ENCODE measurements at regions of chr11 and their contacts with region 1.

Region 1: DNA sequence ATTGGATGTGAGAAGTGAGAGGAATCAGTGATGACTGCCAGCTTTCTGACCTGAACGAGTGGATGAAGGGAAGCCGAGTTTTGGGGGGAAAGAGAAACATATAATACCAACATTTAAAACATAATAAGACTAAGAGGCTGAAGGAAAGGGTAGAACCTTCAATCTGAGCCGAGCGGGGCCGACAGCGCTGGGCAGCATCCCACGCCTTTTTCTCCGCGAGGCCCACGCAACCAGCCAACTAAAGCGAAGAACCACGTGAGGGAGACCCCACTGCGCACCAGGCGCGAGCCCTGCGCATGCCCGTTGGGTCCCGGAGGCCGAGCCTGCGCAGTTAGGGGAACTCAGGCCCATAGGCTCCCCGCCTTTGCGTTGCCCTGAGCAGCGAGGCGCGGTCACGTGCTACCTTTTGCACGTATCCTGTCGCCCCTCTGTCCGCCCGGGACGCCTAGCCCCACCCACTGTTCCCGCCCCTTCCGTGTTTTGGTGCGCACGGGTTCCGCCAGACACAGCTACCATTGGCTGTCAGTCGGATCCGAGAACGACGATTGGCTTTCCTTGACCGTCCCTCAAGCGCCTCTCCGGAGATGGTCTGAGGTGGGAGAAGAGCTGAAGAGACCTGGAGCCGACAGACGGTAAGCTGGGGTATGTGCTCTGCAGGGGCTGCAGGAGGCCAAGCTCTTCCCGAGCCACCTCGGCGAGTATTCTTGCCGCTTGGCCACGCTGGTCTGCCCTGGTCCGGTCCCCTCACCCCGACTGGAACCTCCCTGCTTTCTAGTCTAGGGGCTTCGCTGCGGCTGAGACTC is at the start of gene HINFP:
- DNase-seq: peak; percentile 97 to 100 (median 99)
- H3K4me3 ChIP-seq: peak within 1 kb of the TSS; percentile 78 to 90
- H3K4me3 Mint-ChIP-seq: peak within 1 kb of the TSS; percentile 88 to 99 (median 95)
- H3K27ac ChIP-seq: peak within 1 kb of the TSS; percentile 85
- H3K27ac Mint-ChIP-seq: peak within 1 kb of the TSS; percentile 90 to 98 (median 94)
- H3K4me1 ChIP-seq: peaks cover 33% of the 10 kb centered on the region
- H3K4me1 Mint-ChIP-seq: peaks cover 24 to 51% (median 28%) of the 10 kb centered on the region in 4 donors
- H3K27me3 ChIP-seq: no peaks in the 10 kb centered on the region
- H3K27me3 Mint-ChIP-seq: no peaks in the 10 kb centered on the region
- total RNA-seq, gene HINFP: 70.8 to 75.3 TPM

Region 2: GRCh38 chr11:119018074-119018938 is 102.9 kb before region 1 on chr11 and contains the starts of genes RPS25 and TRAPPC4:
- CTCF ChIA-PET with region 1: no interaction called
- POLR2A ChIA-PET with region 1: interaction called, 6 read pairs
- intact Hi-C with region 1: loop called (anchors 1 kb)
- DNase-seq: peak; percentile 96 to 98 (median 97)
- H3K4me3 ChIP-seq: peak within 1 kb of the TSS; percentile 71 to 96
- H3K4me3 Mint-ChIP-seq: peak within 1 kb of the TSS; percentile 94 to 100 (median 99)
- H3K27ac ChIP-seq: peak within 1 kb of the TSS; percentile 87
- H3K27ac Mint-ChIP-seq: peak within 1 kb of the TSS; percentile 98 to 100 (median 100)
- H3K4me1 ChIP-seq: peaks cover 52% of the 10 kb centered on the region
- H3K4me1 Mint-ChIP-seq: peaks cover 21 to 73% (median 51%) of the 10 kb centered on the region in 4 donors
- H3K27me3 ChIP-seq: no peaks in the 10 kb centered on the region
- H3K27me3 Mint-ChIP-seq: no peaks in the 10 kb centered on the region
- total RNA-seq, gene RPS25: 2,545 to 2,705 TPM
- total RNA-seq, gene TRAPPC4: 89.2 to 97.3 TPM

Region 3: DNA sequence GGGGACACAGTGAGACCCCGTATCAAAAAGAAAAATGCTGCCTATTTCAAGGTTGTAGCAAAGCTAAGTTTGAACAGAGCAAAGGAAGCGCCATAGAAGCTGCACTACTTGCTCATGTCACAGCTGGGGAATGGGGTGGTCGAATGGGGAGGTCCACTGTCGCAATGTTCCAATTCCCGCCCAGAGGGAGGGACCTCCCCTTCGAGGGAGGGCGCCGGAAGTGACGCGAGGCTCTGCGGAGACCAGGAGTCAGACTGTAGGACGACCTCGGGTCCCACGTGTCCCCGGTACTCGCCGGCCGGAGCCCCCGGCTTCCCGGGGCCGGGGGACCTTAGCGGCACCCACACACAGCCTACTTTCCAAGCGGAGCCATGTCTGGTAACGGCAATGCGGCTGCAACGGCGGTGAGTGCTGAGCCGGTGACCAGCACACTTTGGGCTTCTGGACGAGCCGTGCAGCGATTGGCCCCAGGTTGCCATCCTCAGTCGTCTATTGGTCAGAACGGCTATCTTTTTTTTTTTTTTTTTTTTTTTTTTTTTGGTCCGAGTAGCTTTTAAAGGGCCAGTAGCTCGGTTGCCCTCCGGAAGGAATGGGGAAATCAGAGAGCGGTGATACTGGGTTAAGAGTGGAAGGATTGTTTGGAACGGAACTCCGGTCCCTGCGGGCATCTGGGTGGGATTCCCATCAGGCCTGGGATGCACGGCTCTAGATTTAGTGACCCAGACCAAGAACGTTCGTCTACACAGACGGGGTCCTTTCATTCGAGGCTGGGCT is 36.4 kb before region 1 on chr11 and contains the start of gene HMBS:
- CTCF ChIA-PET with region 1: interaction called, 3 read pairs
- POLR2A ChIA-PET with region 1: interaction called, 11 read pairs
- intact Hi-C with region 1: loop called (anchors 1 kb)
- DNase-seq: peak; percentile 88 to 93 (median 89)
- H3K4me3 ChIP-seq: peak within 1 kb of the TSS; percentile 83 to 90
- H3K4me3 Mint-ChIP-seq: peak within 1 kb of the TSS; percentile 92 to 96 (median 94)
- H3K27ac ChIP-seq: peak within 1 kb of the TSS; percentile 76
- H3K27ac Mint-ChIP-seq: peak within 1 kb of the TSS; percentile 93 to 98 (median 96)
- H3K4me1 ChIP-seq: peaks cover 13% of the 10 kb centered on the region
- H3K4me1 Mint-ChIP-seq: peaks cover 9 to 19% (median 14%) of the 10 kb centered on the region in 4 donors
- H3K27me3 ChIP-seq: no peaks in the 10 kb centered on the region
- H3K27me3 Mint-ChIP-seq: no peaks in the 10 kb centered on the region
- total RNA-seq, gene HMBS: 5.1 to 5.8 TPM

Region 4: GRCh38 chr11:119144825-119145486 is 23.7 kb after region 1 on chr11:
- CTCF ChIA-PET with region 1: interaction called, 4 read pairs
- POLR2A ChIA-PET with region 1: interaction called, 10 read pairs
- intact Hi-C with region 1: no loop called
- DNase-seq: peak in 3 of 5 donors; percentile 12 to 48 (median 16)
- H3K4me3 ChIP-seq: no peak overlapping the region
- H3K4me3 Mint-ChIP-seq: no peak overlapping the region
- H3K27ac ChIP-seq: no peak overlapping the region
- H3K27ac Mint-ChIP-seq: no peak overlapping the region
- H3K4me1 ChIP-seq: peaks cover 14% of the 10 kb centered on the region
- H3K4me1 Mint-ChIP-seq: peaks cover 2 to 15% (median 9%) of the 10 kb centered on the region in 4 donors
- H3K27me3 ChIP-seq: peaks cover 13% of the 10 kb centered on the region
- H3K27me3 Mint-ChIP-seq: peaks cover 16 to 32% of the 10 kb centered on the region in 2 donors

Region 5: GRCh38 chr11:119168471-119169281 is 47.5 kb after region 1 on chr11 and contains the start of gene NLRX1:
- CTCF ChIA-PET with region 1: interaction called, 3 read pairs
- POLR2A ChIA-PET with region 1: interaction called, 4 read pairs
- intact Hi-C with region 1: loop called (anchors 5 kb)
- DNase-seq: peak; percentile 81 to 83 (median 82)
- H3K4me3 ChIP-seq: peak within 1 kb of the TSS; percentile 78 to 79
- H3K4me3 Mint-ChIP-seq: peak within 1 kb of the TSS; percentile 89 to 91 (median 90)
- H3K27ac ChIP-seq: peak within 1 kb of the TSS; percentile 67
- H3K27ac Mint-ChIP-seq: peak within 1 kb of the TSS; percentile 68 to 90 (median 89)
- H3K4me1 ChIP-seq: peaks cover 6% of the 10 kb centered on the region
- H3K4me1 Mint-ChIP-seq: peaks cover 1 to 10% (median 8%) of the 10 kb centered on the region in 4 donors
- H3K27me3 ChIP-seq: no peaks in the 10 kb centered on the region
- H3K27me3 Mint-ChIP-seq: no peaks in the 10 kb centered on the region
- total RNA-seq, gene NLRX1: 8.8 to 9.2 TPM

Region 6: GRCh38 chr11:119181677-119182412 is 60.6 kb after region 1 on chr11:
- CTCF ChIA-PET with region 1: no interaction called
- POLR2A ChIA-PET with region 1: no interaction called
- intact Hi-C with region 1: no loop called
- DNase-seq: no peak
- H3K4me3 ChIP-seq: no peak overlapping the region
- H3K4me3 Mint-ChIP-seq: no peak overlapping the region
- H3K27ac ChIP-seq: no peak overlapping the region
- H3K27ac Mint-ChIP-seq: no peak overlapping the region
- H3K4me1 ChIP-seq: peaks cover 11% of the 10 kb centered on the region
- H3K4me1 Mint-ChIP-seq: peaks cover 3 to 10% (median 4%) of the 10 kb centered on the region in 4 donors
- H3K27me3 ChIP-seq: no peaks in the 10 kb centered on the region
- H3K27me3 Mint-ChIP-seq: no peaks in the 10 kb centered on the region

Region 7: GRCh38 chr11:119222308-119222707 is 101.1 kb after region 1 on chr11:
- CTCF ChIA-PET with region 1: no interaction called
- POLR2A ChIA-PET with region 1: no interaction called
- intact Hi-C with region 1: no loop called
- DNase-seq: no peak
- H3K4me3 ChIP-seq: no peak overlapping the region
- H3K4me3 Mint-ChIP-seq: peak overlapping the region in 4 of 8 donors; percentile 0 to 63 (median 32)
- H3K27ac ChIP-seq: no peak overlapping the region
- H3K27ac Mint-ChIP-seq: peak overlapping the region in 4 of 7 donors; percentile 15 to 78 (median 40)
- H3K4me1 ChIP-seq: peaks cover 31% of the 10 kb centered on the region
- H3K4me1 Mint-ChIP-seq: peaks cover 42 to 68% (median 56%) of the 10 kb centered on the region in 4 donors
- H3K27me3 ChIP-seq: no peaks in the 10 kb centered on the region
- H3K27me3 Mint-ChIP-seq: no peaks in the 10 kb centered on the region